ENCODE measurements at regions of chr12 and their contacts with region 1.

Region 1: DNA sequence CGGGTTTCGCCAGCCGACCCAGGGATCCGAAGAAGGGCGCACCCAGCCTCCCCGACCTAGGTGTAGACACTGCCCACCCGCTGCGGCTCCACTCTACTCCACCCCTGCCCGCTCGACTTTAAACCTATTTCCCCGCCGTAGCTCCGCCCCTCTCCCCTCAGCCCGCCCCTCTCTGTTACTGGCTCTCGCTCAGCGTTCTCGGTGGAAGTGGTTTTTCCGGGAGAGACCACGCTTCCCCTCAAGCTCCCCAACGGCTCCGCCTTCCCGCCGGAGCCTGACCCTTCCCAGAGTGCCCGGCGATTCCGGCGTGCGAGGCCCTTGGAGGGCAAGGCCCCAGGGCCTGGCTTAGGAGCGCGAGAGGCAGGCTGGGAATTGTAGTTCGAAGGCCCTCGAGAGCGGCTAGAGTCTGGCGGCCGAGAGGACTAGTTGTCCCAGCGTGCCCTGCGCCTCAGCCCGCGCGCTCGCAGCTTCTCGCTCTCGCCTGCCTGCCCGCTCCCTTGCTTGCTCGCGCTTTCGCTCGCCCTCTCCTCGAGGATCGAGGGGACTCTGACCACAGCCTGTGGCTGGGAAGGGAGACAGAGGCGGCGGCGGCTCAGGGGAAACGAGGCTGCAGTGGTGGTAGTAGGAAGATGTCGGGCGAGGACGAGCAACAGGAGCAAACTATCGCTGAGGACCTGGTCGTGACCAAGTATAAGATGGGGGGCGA is at the start of gene PA2G4:
- DNase-seq: peak; percentile 99
- ATAC-seq: peak; percentile 95
- H3K4me3 Mint-ChIP-seq: peak within 1 kb of the TSS; percentile 100
- H3K27ac Mint-ChIP-seq: peak within 1 kb of the TSS; percentile 100
- H3K4me1 Mint-ChIP-seq: peaks cover 43% of the 10 kb centered on the region
- H3K27me3 Mint-ChIP-seq: no peaks in the 10 kb centered on the region
- total RNA-seq, gene PA2G4: 446 to 695 TPM

Region 2: DNA sequence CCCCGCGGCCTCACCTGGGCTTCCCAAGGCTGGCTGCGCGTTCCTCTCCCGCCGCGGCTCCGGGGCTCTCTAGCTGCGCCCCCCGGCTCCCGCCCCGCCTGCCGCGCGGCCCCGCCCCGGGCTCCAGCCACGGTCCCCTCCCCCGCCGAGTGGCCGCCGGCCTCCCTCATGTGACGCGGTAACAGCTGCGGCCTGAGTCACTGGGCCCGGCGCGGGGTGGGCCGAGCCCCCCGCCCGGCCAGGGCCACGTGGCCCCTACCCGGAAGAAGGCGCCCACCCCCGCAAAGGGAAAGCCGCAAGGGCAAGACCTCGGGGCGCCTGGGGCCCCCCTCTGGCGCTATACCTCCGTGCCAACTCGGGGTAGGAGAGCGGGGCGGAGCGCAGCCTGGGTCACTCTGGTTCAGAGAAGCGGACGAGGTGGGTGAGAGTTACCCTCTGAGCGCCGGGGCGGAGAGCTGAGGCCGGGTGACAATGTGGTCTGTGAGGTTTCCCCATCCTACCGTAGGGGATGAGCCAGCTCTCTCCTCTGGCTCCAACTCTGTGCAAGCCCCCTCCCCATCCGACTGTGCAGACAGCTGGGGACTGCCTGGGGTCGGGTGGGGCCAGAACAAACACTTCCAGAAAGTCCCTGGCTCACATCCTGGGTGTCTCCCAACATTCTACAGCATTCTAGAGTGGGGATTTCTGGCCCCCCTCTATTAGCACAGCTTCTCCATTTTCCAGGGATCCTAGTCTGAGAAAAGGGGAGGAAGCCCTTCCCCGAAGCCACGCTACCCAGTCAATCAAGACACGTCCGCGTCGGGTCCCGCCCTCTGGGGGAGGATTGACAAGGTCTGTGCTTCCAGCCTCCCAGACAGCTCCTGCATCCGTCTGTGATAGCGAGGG is 375.1 kb before region 1 on chr12 and contains the start of gene CD63:
- CTCF ChIA-PET with region 1: no interaction called
- POLR2A ChIA-PET with region 1: no interaction called
- intact Hi-C with region 1: loop called in 1 of 2 experiments (anchors 2 kb)
- DNase-seq: peak; percentile 89
- ATAC-seq: peak; percentile 73
- H3K4me3 Mint-ChIP-seq: peak within 1 kb of the TSS; percentile 93
- H3K27ac Mint-ChIP-seq: peak within 1 kb of the TSS; percentile 95
- H3K4me1 Mint-ChIP-seq: peaks cover 34% of the 10 kb centered on the region
- H3K27me3 Mint-ChIP-seq: no peaks in the 10 kb centered on the region
- total RNA-seq, gene CD63: 113 to 122 TPM

Region 3: GRCh38 chr12:55973598-55974307 is 130.5 kb before region 1 on chr12 and contains the start of gene RAB5B:
- CTCF ChIA-PET with region 1: no interaction called
- POLR2A ChIA-PET with region 1: interaction called, 5 read pairs
- intact Hi-C with region 1: loop called (anchors 1 kb)
- DNase-seq: peak; percentile 98
- ATAC-seq: peak; percentile 93
- H3K4me3 Mint-ChIP-seq: no peak within 1 kb of the TSS
- H3K27ac Mint-ChIP-seq: no peak within 1 kb of the TSS
- H3K4me1 Mint-ChIP-seq: peaks cover 28% of the 10 kb centered on the region
- H3K27me3 Mint-ChIP-seq: no peaks in the 10 kb centered on the region
- total RNA-seq, gene RAB5B: 33.2 to 35.1 TPM

Region 4: GRCh38 chr12:56041552-56042429 is 62.5 kb before region 1 on chr12 and contains the start of gene RPS26:
- CTCF ChIA-PET with region 1: interaction called, 24 read pairs
- POLR2A ChIA-PET with region 1: interaction called, 28 read pairs
- intact Hi-C with region 1: loop called (anchors 1 kb)
- DNase-seq: peak; percentile 97
- ATAC-seq: peak; percentile 92
- H3K4me3 Mint-ChIP-seq: peak within 1 kb of the TSS; percentile 91
- H3K27ac Mint-ChIP-seq: peak within 1 kb of the TSS; percentile 99
- H3K4me1 Mint-ChIP-seq: peaks cover 61% of the 10 kb centered on the region
- H3K27me3 Mint-ChIP-seq: no peaks in the 10 kb centered on the region
- total RNA-seq, gene RPS26: 33.9 to 64.0 TPM

Region 5: DNA sequence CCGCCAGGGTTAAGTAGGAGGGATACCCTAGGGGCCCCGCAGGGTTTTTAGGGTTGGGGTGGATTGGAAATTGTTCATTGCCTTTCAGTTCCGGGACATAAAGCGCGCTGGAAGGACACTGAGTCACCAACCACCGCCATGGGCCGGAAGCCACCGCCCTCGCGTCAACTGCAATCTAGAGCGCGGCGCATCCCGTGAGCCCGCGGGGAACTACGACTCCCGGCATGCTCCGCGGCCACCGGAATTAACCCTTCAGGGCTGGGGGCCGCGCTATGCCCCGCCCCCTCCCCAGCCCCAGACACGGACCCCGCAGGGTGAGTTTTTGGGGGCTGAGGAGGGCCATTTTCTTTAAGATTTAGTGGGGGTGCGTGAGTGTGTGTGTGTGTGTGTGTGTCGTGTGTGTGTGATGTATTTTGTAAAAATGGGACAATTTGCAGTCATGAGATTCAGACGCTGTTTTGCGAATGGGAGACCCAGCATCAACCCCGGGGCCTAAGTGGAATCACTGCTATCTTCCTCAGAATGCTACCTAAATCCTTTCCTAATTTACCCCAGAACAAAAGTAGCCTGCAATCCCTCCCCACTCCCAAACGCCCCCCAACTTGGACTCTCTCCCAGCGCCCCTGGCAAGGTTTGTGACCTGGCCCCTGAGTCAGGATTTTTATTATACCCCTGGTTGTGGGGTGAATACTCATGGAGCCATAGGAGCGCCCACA is 48.2 kb after region 1 on chr12 and contains the start of gene MYL6B:
- CTCF ChIA-PET with region 1: interaction called, 3 read pairs
- POLR2A ChIA-PET with region 1: no interaction called
- intact Hi-C with region 1: loop called (anchors 1 kb)
- DNase-seq: peak; percentile 98
- ATAC-seq: peak; percentile 92
- H3K4me3 Mint-ChIP-seq: peak within 1 kb of the TSS; percentile 88
- H3K27ac Mint-ChIP-seq: peak within 1 kb of the TSS; percentile 99
- H3K4me1 Mint-ChIP-seq: peaks cover 29% of the 10 kb centered on the region
- H3K27me3 Mint-ChIP-seq: no peaks in the 10 kb centered on the region
- total RNA-seq, gene MYL6B: 76.3 to 79.3 TPM

Region 6: DNA sequence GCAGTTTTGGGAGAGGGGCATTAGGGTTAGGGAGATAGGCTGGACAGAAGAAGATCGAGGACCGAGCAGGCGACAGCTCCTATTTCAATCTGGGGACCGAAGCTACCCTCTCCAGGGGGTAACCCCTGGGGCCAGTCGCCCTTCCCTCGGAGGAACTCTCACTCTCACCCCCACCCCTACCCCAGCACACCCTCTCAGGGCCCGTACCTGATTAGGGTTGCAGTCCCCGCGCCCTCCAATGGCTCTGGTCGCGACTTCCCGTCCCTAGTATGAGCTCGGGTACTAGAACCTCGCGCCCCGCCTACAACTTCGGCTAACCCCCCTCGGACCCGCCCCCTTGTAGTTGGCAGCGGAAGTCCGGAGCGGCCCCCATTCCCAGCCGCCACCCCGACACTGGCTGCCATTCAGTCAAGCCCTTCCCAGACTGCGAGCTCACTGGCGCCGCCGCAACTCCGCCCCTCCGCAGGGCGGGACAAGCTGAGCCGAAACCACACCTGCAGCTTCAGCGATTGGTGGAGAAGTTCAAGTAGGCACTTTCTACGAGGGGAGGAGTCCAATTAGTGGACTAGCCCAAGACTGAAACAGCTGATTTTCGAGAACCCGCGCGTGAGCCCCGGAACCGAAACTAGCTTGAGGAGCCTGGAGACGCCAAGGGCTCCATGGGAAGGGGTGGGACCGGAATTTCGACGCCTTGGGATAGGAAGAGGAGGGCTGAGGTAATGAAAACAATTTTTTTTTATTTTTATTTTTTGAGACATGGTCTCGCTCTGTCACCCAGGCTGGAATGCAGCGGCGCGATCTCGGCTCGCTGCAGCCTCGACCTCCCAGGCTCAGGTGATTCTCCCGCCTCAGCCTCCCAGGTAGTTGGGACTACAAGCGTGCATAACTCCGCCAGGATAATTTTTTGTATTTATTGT is 255.8 kb after region 1 on chr12 and contains the start of gene STAT2:
- CTCF ChIA-PET with region 1: no interaction called
- POLR2A ChIA-PET with region 1: interaction called, 5 read pairs
- intact Hi-C with region 1: loop called in 1 of 2 experiments (anchors 1 kb)
- DNase-seq: peak; percentile 99
- ATAC-seq: peak; percentile 97
- H3K4me3 Mint-ChIP-seq: peak within 1 kb of the TSS; percentile 86
- H3K27ac Mint-ChIP-seq: peak within 1 kb of the TSS; percentile 95
- H3K4me1 Mint-ChIP-seq: peaks cover 23% of the 10 kb centered on the region
- H3K27me3 Mint-ChIP-seq: no peaks in the 10 kb centered on the region
- total RNA-seq, gene STAT2: 116 to 124 TPM

Measured in activated CD4-positive, alpha-beta T cell treated with anti-CD3 and anti-CD28 coated beads for 36 hours (primary cell).